GM10248 (cell line): ENCODE measurements at regions of chr9 and their contacts with region 1.

Region 1: GRCh38 chr9:7467186-7467585 is 332.4 kb downstream of the DMAC1 start:
- DNase-seq: no peak
- CTCF ChIP-seq: no peak

Region 2: DNA sequence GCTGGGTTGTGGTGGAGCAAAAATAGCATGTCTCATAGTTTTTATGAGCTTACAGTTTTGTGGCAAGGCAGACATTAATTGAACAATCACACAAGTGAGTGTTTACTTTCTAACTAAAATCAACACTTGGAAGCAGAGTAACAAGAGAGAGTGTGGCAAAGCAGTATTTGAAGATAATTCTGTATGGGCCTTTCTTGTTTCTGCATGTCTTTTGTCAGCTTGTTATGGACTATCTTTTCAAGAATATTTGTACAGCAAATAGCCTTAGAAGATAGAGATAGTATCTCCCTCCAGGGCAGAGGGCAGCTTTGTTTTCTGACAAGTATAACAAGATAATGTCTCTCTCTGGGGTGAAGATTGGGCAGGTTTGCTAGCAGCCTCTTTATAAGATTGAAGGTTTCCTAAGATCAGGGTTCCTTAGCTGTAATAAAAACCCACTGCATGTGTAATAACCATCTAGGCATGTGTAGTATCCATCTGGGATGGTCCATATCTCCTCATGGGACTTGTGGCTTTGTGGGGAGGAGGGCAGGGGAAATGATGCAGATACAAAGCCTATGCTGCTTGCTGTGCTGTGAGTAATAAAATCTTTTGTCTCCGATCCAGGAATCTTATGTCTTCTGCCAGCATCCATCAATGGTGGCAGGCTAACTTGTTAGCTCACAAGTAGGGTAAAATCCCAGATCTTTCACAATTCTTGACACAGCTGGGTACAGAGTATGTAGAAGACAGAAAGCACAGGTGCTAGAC is 229.5 kb before region 1 on chr9:
- CTCF ChIA-PET with region 1: no interaction called
- POLR2A ChIA-PET with region 1: no interaction called
- DNase-seq: no peak
- CTCF ChIP-seq: no peak

Region 3: GRCh38 chr9:7456377-7456776 is 10.8 kb before region 1 on chr9:
- CTCF ChIA-PET with region 1: interaction called, 21 read pairs
- POLR2A ChIA-PET with region 1: no interaction called
- DNase-seq: no peak
- CTCF ChIP-seq: no peak